Endothelial cell of umbilical vein (primary cell): ENCODE measurements at regions of chr1 and their contacts with region 1.

Region 1: GRCh38 chr1:205977402-205978014 is 25.7 kb downstream of the RAB7B start:
- DNase-seq: peak; percentile 68
- H3K4me3 ChIP-seq: no peak overlapping the region
- H3K27ac ChIP-seq: no peak overlapping the region
- H3K4me1 ChIP-seq: peaks cover 5% of the 10 kb centered on the region
- H3K27me3 ChIP-seq: no peaks in the 10 kb centered on the region
- CTCF ChIP-seq: peak; percentile 91 to 98
- POLR2A ChIP-seq: no peak

Region 2: GRCh38 chr1:205504985-205505729 is 472.4 kb before region 1 on chr1:
- CTCF ChIA-PET with region 1: no interaction called
- POLR2A ChIA-PET with region 1: no interaction called
- dilution Hi-C with region 1: no loop called
- intact Hi-C with region 1: no loop called
- DNase-seq: no peak
- H3K4me3 ChIP-seq: peak overlapping the region in 1 of 3 experiments; percentile 28
- H3K27ac ChIP-seq: no peak overlapping the region
- H3K4me1 ChIP-seq: no peaks in the 10 kb centered on the region
- H3K27me3 ChIP-seq: peaks cover 26 to 35% of the 10 kb centered on the region in 2 experiments
- CTCF ChIP-seq: no peak
- POLR2A ChIP-seq: no peak

Region 3: GRCh38 chr1:205658943-205659581 is 318.4 kb before region 1 on chr1:
- CTCF ChIA-PET with region 1: interaction called, 117 read pairs
- POLR2A ChIA-PET with region 1: no interaction called
- dilution Hi-C with region 1: no loop called
- intact Hi-C with region 1: loop called (anchors 1 kb)
- DNase-seq: peak; percentile 70
- H3K4me3 ChIP-seq: no peak overlapping the region
- H3K27ac ChIP-seq: no peak overlapping the region
- H3K4me1 ChIP-seq: peaks cover 16% of the 10 kb centered on the region
- H3K27me3 ChIP-seq: no peaks in the 10 kb centered on the region
- CTCF ChIP-seq: peak; percentile 89 to 91
- POLR2A ChIP-seq: no peak

Region 4: GRCh38 chr1:205805082-205805712 is 172.3 kb before region 1 on chr1:
- CTCF ChIA-PET with region 1: interaction called, 33 read pairs
- POLR2A ChIA-PET with region 1: no interaction called
- dilution Hi-C with region 1: no loop called
- intact Hi-C with region 1: no loop called
- DNase-seq: no peak
- H3K4me3 ChIP-seq: no peak overlapping the region
- H3K27ac ChIP-seq: no peak overlapping the region
- H3K4me1 ChIP-seq: no peaks in the 10 kb centered on the region
- H3K27me3 ChIP-seq: no peaks in the 10 kb centered on the region
- CTCF ChIP-seq: no peak
- POLR2A ChIP-seq: no peak

Region 5: DNA sequence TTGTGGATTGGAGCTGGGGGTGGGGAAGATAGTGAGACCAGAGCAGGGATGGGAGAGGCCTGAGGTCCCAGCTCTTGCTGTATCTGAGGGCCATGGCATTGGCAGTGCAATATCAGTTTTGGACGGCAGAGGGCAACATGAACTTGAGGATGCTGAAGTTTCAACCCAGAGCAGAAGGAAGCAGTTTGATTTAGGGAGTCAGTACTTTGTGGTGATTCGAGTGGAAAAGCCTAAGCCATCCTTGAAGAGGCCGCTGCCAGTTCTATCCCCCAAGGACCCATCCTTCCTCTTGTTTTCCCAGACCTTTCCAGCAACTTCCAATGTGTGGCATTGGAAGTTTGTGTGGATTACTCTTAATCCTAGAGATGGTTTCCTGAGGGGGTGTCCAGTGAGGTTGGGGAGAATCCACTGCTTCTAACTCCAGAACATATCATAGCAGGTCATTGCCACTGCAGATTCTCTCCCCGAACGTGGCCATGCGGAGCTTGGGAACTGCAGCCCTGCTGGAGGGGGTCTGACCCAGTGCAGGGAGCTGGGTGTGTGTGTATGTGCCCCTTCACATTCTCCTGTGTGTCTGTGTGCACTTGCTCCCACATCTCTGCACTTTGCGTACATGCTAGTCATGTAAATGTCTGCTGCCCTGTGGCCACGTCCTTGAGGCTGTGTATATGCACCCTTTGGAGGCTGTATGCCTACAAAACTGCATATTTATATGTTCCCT is 58.3 kb before region 1 on chr1:
- CTCF ChIA-PET with region 1: interaction called, 1,606 read pairs
- POLR2A ChIA-PET with region 1: interaction called, 7 read pairs
- dilution Hi-C with region 1: no loop called
- intact Hi-C with region 1: loop called (anchors 1 kb)
- DNase-seq: peak; percentile 85
- H3K4me3 ChIP-seq: no peak overlapping the region
- H3K27ac ChIP-seq: no peak overlapping the region
- H3K4me1 ChIP-seq: no peaks in the 10 kb centered on the region
- H3K27me3 ChIP-seq: no peaks in the 10 kb centered on the region
- CTCF ChIP-seq: peak; percentile 83 to 86
- POLR2A ChIP-seq: no peak

Region 6: DNA sequence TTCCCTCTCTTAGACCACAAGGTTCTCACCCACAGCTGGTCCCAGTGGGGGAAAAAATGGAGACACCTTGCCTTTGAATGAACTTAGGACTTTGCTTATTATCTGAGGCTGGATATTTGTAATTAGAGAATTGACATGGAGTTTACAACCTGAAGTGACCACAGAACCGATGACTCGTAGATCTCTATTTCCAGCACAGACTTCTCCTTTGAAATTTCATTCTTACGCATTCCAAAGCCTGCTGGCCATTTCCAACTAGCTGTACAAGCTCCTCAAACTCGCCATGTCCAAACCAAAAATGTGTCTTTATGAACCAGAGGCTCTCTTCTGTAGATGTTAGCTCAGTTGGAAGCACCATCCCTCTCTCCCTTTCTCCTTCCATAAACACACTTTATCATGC is 13.7 kb after region 1 on chr1:
- CTCF ChIA-PET with region 1: interaction called, 31 read pairs
- POLR2A ChIA-PET with region 1: no interaction called
- dilution Hi-C with region 1: no loop called
- intact Hi-C with region 1: no loop called
- DNase-seq: no peak
- H3K4me3 ChIP-seq: no peak overlapping the region
- H3K27ac ChIP-seq: no peak overlapping the region
- H3K4me1 ChIP-seq: peaks cover 21% of the 10 kb centered on the region
- H3K27me3 ChIP-seq: no peaks in the 10 kb centered on the region
- CTCF ChIP-seq: no peak
- POLR2A ChIP-seq: no peak

Region 7: GRCh38 chr1:206106328-206107167 is 129.0 kb after region 1 on chr1:
- CTCF ChIA-PET with region 1: interaction called, 319 read pairs
- POLR2A ChIA-PET with region 1: no interaction called
- dilution Hi-C with region 1: loop called (anchors 25 kb)
- intact Hi-C with region 1: no loop called
- DNase-seq: peak; percentile 85
- H3K4me3 ChIP-seq: no peak overlapping the region
- H3K27ac ChIP-seq: no peak overlapping the region
- H3K4me1 ChIP-seq: peaks cover 5% of the 10 kb centered on the region
- H3K27me3 ChIP-seq: no peaks in the 10 kb centered on the region
- CTCF ChIP-seq: peak; percentile 87 to 88
- POLR2A ChIP-seq: no peak